ENCODE measurements at regions of chr7 and their contacts with region 1.

Region 1: DNA sequence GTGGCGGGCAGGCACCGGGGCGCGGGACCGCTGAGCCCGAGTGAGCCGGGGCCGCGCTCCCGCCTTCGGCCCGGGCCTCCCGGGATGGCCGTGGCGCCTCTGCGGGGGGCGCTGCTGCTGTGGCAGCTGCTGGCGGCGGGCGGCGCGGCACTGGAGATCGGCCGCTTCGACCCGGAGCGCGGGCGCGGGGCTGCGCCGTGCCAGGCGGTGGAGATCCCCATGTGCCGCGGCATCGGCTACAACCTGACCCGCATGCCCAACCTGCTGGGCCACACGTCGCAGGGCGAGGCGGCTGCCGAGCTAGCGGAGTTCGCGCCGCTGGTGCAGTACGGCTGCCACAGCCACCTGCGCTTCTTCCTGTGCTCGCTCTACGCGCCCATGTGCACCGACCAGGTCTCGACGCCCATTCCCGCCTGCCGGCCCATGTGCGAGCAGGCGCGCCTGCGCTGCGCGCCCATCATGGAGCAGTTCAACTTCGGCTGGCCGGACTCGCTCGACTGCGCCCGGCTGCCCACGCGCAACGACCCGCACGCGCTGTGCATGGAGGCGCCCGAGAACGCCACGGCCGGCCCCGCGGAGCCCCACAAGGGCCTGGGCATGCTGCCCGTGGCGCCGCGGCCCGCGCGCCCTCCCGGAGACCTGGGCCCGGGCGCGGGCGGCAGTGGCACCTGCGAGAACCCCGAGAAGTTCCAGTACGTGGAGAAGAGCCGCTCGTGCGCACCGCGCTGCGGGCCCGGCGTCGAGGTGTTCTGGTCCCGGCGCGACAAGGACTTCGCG is 534 bp downstream of the FZD9 start:
- DNase-seq: peak in 1 of 2 donors; percentile 57
- H3K4me3 ChIP-seq: peak overlapping the region; percentile 44 to 46 (median 45)
- H3K27ac ChIP-seq: peak overlapping the region in 2 of 5 donors; percentile 16 to 29
- H3K4me1 ChIP-seq: peaks cover 0 to 23% (median 11%) of the 10 kb centered on the region in 4 donors
- H3K27me3 ChIP-seq: peaks cover 0 to 50% (median 17%) of the 10 kb centered on the region in 3 donors
- CTCF ChIP-seq: no peak
- EP300 ChIP-seq: no peak
- POLR2A ChIP-seq: no peak

Region 2: GRCh38 chr7:73312831-73313526 is 121.1 kb before region 1 on chr7:
- intact Hi-C with region 1: loop called (anchors 10 kb)
- DNase-seq: no peak
- H3K4me3 ChIP-seq: no peak overlapping the region
- H3K27ac ChIP-seq: no peak overlapping the region
- H3K4me1 ChIP-seq: peaks cover 5 to 15% (median 11%) of the 10 kb centered on the region in 4 donors
- H3K27me3 ChIP-seq: no peaks in the 10 kb centered on the region
- CTCF ChIP-seq: no peak
- EP300 ChIP-seq: no peak
- POLR2A ChIP-seq: no peak